ENCODE measurements at regions of chr16 and their contacts with region 1.

Region 1: DNA sequence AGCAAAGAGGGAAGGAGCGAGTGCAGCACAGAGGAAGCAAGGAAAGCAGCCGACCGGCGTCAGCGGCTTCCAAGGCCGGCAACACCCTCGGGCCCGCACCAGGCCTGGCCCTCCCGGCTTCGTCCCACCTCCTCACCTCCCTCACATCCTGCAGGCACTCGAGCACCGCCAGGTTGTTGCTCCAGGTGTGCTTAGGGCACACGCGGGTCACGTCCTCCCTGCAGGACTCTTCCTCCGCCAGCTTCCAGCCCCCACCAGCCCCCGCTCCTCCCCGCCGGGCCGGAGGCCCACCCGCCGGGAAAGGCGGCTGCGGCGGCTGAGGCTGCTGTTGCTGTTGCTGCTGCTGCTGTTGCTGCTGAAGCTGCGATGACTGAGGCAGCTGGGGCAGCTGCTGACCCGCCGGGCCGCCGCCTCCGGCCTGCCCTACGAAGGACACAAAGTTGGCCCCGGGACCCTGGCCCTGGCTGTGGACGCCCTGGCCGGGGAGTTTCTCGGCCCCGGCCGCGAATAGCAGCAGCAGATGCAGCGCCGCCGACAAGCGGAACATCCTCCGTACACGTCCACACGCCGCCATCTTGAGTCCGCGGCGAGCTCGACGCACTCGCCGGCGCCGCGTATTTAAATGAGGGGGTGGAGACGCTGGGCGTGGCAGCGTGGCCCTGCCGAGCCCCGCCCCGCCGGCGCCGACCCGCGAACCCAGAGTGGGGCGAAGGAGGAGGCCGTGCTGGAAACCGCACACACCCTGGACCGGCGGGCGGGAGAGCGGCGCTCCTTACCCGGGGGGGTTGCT is at the start of gene GLG1:
- DNase-seq: peak; percentile 95
- H3K4me3 ChIP-seq: peak within 1 kb of the TSS; percentile 64 to 87
- H3K27ac ChIP-seq: peak within 1 kb of the TSS; percentile 88 to 89
- H3K4me1 ChIP-seq: peaks cover 0 to 5% of the 10 kb centered on the region in 2 experiments; a peak in 3 of 4 replicates
- H3K27me3 ChIP-seq: no peaks in the 10 kb centered on the region
- CTCF ChIP-seq: no peak
- EP300 ChIP-seq: peak in 1 of 2 experiments; percentile 20; a peak in 1 of 4 replicates
- RAD21 ChIP-seq: no peak
- polyA plus RNA-seq, gene GLG1: 61.6 and 71.1 TPM in 2 replicates

Region 2: DNA sequence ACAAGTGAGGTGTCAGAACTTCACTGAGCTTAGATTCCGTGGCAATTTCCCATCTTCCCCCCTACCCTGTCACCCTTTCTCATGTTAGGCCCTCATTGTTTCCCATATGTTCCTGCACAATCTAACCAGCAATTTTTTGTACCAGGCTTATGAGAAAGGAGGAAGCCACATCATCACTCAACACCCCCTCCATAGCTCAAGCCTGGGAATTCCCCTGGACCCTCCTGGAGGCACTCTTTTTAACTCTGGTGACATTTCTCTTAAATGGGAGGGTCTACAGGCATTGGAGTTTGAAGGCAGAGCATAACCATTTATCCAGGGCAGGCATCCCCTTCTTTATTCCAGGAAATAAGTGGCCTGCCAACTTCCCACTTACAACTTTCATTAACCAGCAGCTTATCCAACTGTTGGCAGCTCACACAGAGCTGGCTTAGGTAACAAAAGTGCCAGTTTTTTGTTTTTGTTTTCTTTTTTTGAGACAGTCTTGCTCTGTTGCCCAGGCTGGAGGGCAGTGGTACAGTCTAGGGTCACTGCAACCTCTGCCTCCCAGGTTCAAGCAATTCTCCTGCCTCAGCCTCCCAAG is 10.6 kb after region 1 on chr16:
- CTCF ChIA-PET with region 1: interaction called, 18 read pairs
- POLR2A ChIA-PET with region 1: interaction called, 12 read pairs
- DNase-seq: no peak
- H3K4me3 ChIP-seq: no peak overlapping the region
- H3K27ac ChIP-seq: no peak overlapping the region
- H3K4me1 ChIP-seq: no peaks in the 10 kb centered on the region; a peak in 1 of 4 replicates
- H3K27me3 ChIP-seq: no peaks in the 10 kb centered on the region
- CTCF ChIP-seq: no peak
- EP300 ChIP-seq: no peak
- RAD21 ChIP-seq: no peak

Region 3: GRCh38 chr16:74623214-74623842 is 16.6 kb after region 1 on chr16:
- CTCF ChIA-PET with region 1: interaction called, 18 read pairs
- POLR2A ChIA-PET with region 1: no interaction called
- DNase-seq: peak; percentile 47
- H3K4me3 ChIP-seq: no peak overlapping the region
- H3K27ac ChIP-seq: no peak overlapping the region
- H3K4me1 ChIP-seq: peaks cover 9 to 19% of the 10 kb centered on the region in 2 experiments; a peak in 3 of 4 replicates
- H3K27me3 ChIP-seq: no peaks in the 10 kb centered on the region
- CTCF ChIP-seq: peak; percentile 76
- EP300 ChIP-seq: no peak
- RAD21 ChIP-seq: peak; percentile 83

Measured in SK-N-SH (cell line).